Right ventricle myocardium superior (tissue), 1 donor: ENCODE measurements at regions of chr9 and their contacts with region 1.

Region 1: DNA sequence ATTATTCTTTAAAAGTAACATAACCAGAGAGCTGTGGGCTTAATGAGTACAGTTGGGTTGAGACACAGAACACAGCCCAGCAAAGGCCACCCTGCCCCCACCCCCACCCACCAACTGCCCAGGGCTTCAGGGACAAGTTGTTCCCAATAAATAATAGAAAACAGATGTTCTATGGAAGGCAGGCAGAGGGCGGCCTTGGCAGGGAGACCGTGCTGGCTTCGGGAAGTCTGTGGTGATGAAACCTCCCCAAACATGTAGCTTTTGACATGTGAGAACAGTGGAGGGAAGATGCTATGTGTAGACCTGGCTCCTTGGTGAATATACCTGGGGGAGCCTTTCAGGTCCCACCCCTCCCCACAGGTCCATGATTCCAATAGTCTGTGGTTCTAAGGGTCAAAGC is 10.0 kb downstream of the TRAF1 start:
- DNase-seq: peak; percentile 83
- ATAC-seq: peak; percentile 40

Region 2: DNA sequence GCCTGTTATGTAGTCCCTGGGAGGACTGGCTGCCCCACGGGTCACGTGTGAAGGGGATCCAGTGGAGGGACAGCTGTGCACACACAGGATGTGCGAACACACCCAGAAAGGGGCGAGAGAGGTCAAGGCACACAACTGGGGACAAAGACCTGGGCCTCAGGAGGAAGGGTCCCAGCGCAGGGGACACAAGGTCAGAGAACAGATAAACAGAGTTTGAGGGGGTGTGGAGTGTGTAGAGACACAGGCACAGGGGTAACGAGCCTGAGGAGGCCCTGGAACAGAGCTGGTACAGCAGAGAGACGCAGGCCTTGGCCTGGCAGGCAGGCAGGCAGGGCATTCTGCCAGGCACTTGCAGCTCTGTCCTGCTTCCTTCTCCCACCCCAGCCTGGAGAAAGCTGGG is 59.1 kb before region 1 on chr9:
- intact Hi-C with region 1: no loop called
- DNase-seq: no peak
- ATAC-seq: peak; percentile 70

Region 3: DNA sequence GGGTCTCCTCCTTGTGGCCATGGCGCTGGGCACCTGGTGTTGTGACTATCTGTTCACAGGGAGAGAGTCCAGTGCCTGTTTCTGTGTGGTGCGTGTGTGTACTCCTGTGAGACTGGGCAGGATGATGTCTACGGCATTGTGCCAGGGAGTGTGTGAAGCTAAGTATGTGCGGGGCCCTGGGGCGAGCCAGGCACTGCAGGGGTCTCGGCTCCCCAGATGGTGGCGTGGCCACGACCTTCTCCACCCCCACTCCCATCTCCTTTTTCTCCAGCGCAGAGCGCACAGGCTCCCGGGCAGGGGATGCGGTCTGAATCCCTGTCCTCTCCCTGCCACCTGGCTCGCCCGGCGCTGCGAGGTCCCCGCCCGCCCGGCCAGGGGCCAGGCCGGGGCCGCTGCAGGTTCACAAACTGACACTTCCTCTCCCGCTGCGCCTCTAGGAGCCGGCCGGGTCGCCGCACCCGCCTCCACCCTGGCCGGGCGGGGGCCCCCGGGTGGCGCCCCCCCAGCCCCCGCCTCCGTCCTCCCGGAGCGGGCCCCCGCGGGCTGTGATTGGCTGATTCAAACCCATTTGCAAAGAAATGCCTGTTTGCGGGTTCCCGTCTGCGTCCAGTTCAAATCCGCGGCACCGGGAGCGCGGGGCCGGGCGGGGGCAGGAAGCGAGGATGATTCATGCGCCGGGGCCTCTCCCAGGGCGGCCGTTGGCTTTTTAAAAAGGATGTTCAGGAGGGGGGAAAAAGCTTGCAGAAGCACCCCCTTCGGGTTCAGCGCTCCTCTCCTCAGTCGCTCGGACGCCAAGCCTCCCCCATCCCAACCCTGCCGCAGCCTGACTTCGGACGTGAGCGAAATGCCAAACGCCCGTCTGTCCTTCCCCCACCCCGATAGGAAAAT is 40.4 kb before region 1 on chr9:
- intact Hi-C with region 1: loop called (anchors 5 kb)
- DNase-seq: peak; percentile 91
- ATAC-seq: peak; percentile 80